Caco-2 (cell line): ENCODE measurements at regions of chr5 and their contacts with region 1.

Region 1: GRCh38 chr5:66595756-66596635 is at the start of gene MAST4:
- DNase-seq: peak; percentile 93
- H3K4me3 ChIP-seq: peak within 1 kb of the TSS; percentile 61
- H3K4me3 Mint-ChIP-seq: peak within 1 kb of the TSS; percentile 78
- H3K27ac Mint-ChIP-seq: no peak within 1 kb of the TSS
- H3K4me1 ChIP-seq: peaks cover 13% of the 10 kb centered on the region
- H3K4me1 Mint-ChIP-seq: no peaks in the 10 kb centered on the region
- H3K27me3 ChIP-seq: peaks cover 5% of the 10 kb centered on the region
- H3K27me3 Mint-ChIP-seq: peaks cover 29% of the 10 kb centered on the region
- CTCF ChIP-seq: no peak
- total RNA-seq, gene MAST4: 17.8 and 21.5 TPM in 2 replicates

Region 2: GRCh38 chr5:66621146-66621545 is 25.1 kb after region 1 on chr5:
- CTCF ChIA-PET with region 1: no interaction called
- POLR2A ChIA-PET with region 1: no interaction called
- intact Hi-C with region 1: no loop called
- DNase-seq: no peak
- H3K4me3 ChIP-seq: no peak overlapping the region
- H3K4me3 Mint-ChIP-seq: no peak overlapping the region
- H3K27ac Mint-ChIP-seq: no peak overlapping the region
- H3K4me1 ChIP-seq: no peaks in the 10 kb centered on the region
- H3K4me1 Mint-ChIP-seq: no peaks in the 10 kb centered on the region
- H3K27me3 ChIP-seq: no peaks in the 10 kb centered on the region
- H3K27me3 Mint-ChIP-seq: peaks cover 8% of the 10 kb centered on the region
- CTCF ChIP-seq: no peak

Region 3: GRCh38 chr5:66643387-66643786 is 47.4 kb after region 1 on chr5:
- CTCF ChIA-PET with region 1: no interaction called
- POLR2A ChIA-PET with region 1: no interaction called
- intact Hi-C with region 1: no loop called
- DNase-seq: no peak
- H3K4me3 ChIP-seq: no peak overlapping the region
- H3K4me3 Mint-ChIP-seq: no peak overlapping the region
- H3K27ac Mint-ChIP-seq: no peak overlapping the region
- H3K4me1 ChIP-seq: no peaks in the 10 kb centered on the region
- H3K4me1 Mint-ChIP-seq: no peaks in the 10 kb centered on the region
- H3K27me3 ChIP-seq: no peaks in the 10 kb centered on the region
- H3K27me3 Mint-ChIP-seq: peaks cover 7% of the 10 kb centered on the region
- CTCF ChIP-seq: no peak

Region 4: GRCh38 chr5:66757188-66757833 is 161.3 kb after region 1 on chr5:
- CTCF ChIA-PET with region 1: no interaction called
- POLR2A ChIA-PET with region 1: no interaction called
- intact Hi-C with region 1: loop called (anchors 5 kb)
- DNase-seq: peak in 1 of 2 experiments; percentile 36
- H3K4me3 ChIP-seq: no peak overlapping the region
- H3K4me3 Mint-ChIP-seq: no peak overlapping the region
- H3K27ac Mint-ChIP-seq: no peak overlapping the region
- H3K4me1 ChIP-seq: no peaks in the 10 kb centered on the region
- H3K4me1 Mint-ChIP-seq: no peaks in the 10 kb centered on the region
- H3K27me3 ChIP-seq: no peaks in the 10 kb centered on the region
- H3K27me3 Mint-ChIP-seq: peaks cover 22% of the 10 kb centered on the region
- CTCF ChIP-seq: peak; percentile 51 to 58